CD4-positive, alpha-beta T cell (primary cell): ENCODE measurements at regions of chr21 and their contacts with region 1.

Region 1: GRCh38 chr21:38805328-38806152 is at the start of gene ETS2:
- DNase-seq: peak; percentile 37 to 86 (median 64)
- ATAC-seq: peak; percentile 80
- H3K4me3 ChIP-seq: peak within 1 kb of the TSS; percentile 62
- H3K4me3 Mint-ChIP-seq: peak within 1 kb of the TSS; percentile 90
- H3K27ac ChIP-seq: peak within 1 kb of the TSS; percentile 25 to 37
- H3K27ac Mint-ChIP-seq: peak within 1 kb of the TSS; percentile 64
- H3K4me1 ChIP-seq: peaks cover 17% of the 10 kb centered on the region
- H3K4me1 Mint-ChIP-seq: peaks cover 39% of the 10 kb centered on the region
- H3K27me3 ChIP-seq: no peaks in the 10 kb centered on the region
- H3K27me3 Mint-ChIP-seq: no peaks in the 10 kb centered on the region
- CTCF ChIP-seq: peak; percentile 5
- total RNA-seq, gene ETS2: 11.4 to 13.9 TPM

Region 2: DNA sequence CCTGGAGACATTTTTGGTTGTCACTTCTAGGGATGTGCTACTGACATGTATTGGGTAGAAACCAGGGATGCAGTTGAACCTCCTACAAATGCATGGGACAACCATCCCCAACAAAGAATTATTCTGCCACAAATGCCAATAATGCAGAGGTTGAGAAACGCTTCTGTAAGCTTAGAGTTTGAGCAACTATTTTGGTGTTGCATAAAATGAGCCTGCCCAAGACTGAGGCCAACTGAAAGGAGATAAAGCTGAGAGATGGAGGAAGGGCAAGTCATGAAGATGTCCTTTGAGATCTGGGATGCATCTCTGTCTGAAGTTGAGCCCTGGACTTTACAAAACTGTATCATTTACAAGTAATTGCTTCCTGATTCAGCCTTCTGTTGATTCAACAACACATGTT is 441.8 kb before region 1 on chr21:
- CTCF ChIA-PET with region 1: no interaction called
- POLR2A ChIA-PET with region 1: no interaction called
- intact Hi-C with region 1: no loop called
- DNase-seq: no peak
- ATAC-seq: no peak
- H3K4me3 ChIP-seq: no peak overlapping the region
- H3K4me3 Mint-ChIP-seq: no peak overlapping the region
- H3K27ac ChIP-seq: no peak overlapping the region
- H3K27ac Mint-ChIP-seq: no peak overlapping the region
- H3K4me1 ChIP-seq: no peaks in the 10 kb centered on the region
- H3K4me1 Mint-ChIP-seq: no peaks in the 10 kb centered on the region
- H3K27me3 ChIP-seq: no peaks in the 10 kb centered on the region
- H3K27me3 Mint-ChIP-seq: no peaks in the 10 kb centered on the region
- CTCF ChIP-seq: no peak

Region 3: DNA sequence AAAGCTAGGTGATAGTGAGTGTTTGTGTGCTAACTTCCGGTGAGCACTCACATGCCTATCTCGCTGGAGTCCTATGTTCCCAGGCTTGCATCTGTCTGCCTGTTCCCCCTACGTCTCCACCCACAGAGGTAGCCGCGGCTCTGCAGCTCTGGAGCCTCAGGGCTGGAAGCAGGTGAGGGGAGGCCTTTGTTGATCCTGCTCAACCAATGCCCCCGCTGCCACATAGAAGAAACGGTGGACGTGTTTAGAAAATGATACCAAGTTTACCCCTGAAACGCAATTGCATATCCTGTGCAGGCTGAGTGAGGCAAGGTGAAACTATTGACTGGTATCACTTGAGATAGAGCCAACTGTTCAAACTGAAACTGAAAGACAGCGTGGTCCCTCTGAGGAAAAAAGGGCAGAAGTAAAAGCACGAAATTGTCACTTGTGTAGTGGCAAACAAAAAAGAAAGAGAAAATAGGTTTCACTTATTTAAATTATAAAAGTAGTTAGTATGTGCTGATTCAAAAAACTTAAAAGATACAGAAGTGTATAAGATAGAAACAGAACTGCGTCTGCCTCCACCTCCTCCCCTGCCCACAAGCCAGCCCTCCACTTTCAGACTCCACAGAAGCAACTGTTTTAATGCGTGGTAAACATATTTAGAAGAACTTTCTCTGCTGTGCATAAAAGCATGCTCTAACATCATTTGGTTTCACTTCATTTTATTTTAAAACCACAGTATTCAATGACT is 38.4 kb before region 1 on chr21:
- CTCF ChIA-PET with region 1: no interaction called
- POLR2A ChIA-PET with region 1: interaction called, 7 read pairs
- intact Hi-C with region 1: loop called (anchors 1 to 2 kb)
- DNase-seq: peak; percentile 22 to 90 (median 44)
- ATAC-seq: peak; percentile 84
- H3K4me3 ChIP-seq: peak overlapping the region; percentile 53
- H3K4me3 Mint-ChIP-seq: peak overlapping the region; percentile 85
- H3K27ac ChIP-seq: peak overlapping the region; percentile 51 to 78
- H3K27ac Mint-ChIP-seq: peak overlapping the region; percentile 92
- H3K4me1 ChIP-seq: peaks cover 24% of the 10 kb centered on the region
- H3K4me1 Mint-ChIP-seq: peaks cover 26% of the 10 kb centered on the region
- H3K27me3 ChIP-seq: no peaks in the 10 kb centered on the region
- H3K27me3 Mint-ChIP-seq: no peaks in the 10 kb centered on the region
- CTCF ChIP-seq: no peak

Region 4: DNA sequence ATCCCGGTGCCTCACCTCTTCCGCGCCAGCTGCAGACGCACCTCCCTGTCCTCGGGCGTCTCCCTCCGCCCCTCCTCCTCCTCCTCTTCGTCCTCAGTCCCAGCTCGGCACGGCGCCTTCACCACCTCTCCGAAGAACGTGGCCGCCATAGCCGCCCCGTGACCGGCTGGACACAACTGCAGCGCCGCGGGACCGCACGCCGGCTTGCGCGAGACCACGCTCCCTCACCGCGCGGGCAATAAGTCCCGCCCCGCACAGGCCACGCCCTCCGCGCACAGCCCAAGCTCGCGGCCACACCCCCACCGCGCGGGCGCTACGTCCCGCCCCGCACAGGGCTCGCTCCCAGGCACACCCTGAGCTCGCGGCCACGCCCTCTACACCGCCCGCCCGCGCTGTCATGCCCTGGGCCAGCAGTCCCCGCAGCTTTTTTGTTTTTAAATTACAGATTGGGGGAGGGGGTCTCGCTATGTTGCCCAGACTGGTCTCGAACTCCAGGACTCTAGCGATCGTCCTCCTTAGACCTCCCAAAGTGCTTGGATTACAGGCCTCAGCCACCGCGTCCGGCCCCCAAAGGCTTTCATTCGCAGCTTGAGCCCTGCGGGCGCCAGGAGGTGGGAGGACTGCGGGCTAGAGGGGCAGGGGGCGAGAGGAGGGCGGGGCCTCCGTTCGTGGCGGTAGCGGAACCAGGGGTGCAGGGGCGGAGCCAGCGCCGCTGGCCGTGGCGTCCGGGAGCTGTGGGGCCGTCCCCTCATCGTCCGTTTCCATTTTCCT is 377.9 kb after region 1 on chr21 and contains the start of gene PSMG1:
- CTCF ChIA-PET with region 1: no interaction called
- POLR2A ChIA-PET with region 1: no interaction called
- intact Hi-C with region 1: loop called in 1 of 2 experiments (anchors 5 kb)
- DNase-seq: peak; percentile 86 to 97 (median 92)
- ATAC-seq: peak; percentile 92
- H3K4me3 ChIP-seq: peak within 1 kb of the TSS; percentile 87
- H3K4me3 Mint-ChIP-seq: peak within 1 kb of the TSS; percentile 91
- H3K27ac ChIP-seq: peak within 1 kb of the TSS; percentile 81 to 92
- H3K27ac Mint-ChIP-seq: peak within 1 kb of the TSS; percentile 91
- H3K4me1 ChIP-seq: peaks cover 18% of the 10 kb centered on the region
- H3K4me1 Mint-ChIP-seq: peaks cover 76% of the 10 kb centered on the region
- H3K27me3 ChIP-seq: no peaks in the 10 kb centered on the region
- H3K27me3 Mint-ChIP-seq: no peaks in the 10 kb centered on the region
- CTCF ChIP-seq: no peak
- total RNA-seq, gene PSMG1: 7.8 to 7.9 TPM